Activated T-helper 1 cell treated with anti-CD3 and anti-CD28 coated beads, Interleukin-12 subunit alpha, Interleukin-12 subunit beta, Interleukin-2, Interleukin-4 antibody, amounts not matched to agents 30 ng/mL and 10 ng/mL and 1 ng/mL, durations not matched to agents 14 hours and 24 hours and 36 hours (primary cell): ENCODE measurements at regions of chr12 and their contacts with region 1.

Region 1: GRCh38 chr12:47216150-47216677 is 136.5 kb upstream of the AMIGO2 start:
- DNase-seq: peak; percentile 72
- H3K4me3 Mint-ChIP-seq: peak overlapping the region; percentile 93
- H3K27ac Mint-ChIP-seq: peak overlapping the region; percentile 96
- H3K4me1 Mint-ChIP-seq: peaks cover 63% of the 10 kb centered on the region
- H3K27me3 Mint-ChIP-seq: no peaks in the 10 kb centered on the region

Region 2: DNA sequence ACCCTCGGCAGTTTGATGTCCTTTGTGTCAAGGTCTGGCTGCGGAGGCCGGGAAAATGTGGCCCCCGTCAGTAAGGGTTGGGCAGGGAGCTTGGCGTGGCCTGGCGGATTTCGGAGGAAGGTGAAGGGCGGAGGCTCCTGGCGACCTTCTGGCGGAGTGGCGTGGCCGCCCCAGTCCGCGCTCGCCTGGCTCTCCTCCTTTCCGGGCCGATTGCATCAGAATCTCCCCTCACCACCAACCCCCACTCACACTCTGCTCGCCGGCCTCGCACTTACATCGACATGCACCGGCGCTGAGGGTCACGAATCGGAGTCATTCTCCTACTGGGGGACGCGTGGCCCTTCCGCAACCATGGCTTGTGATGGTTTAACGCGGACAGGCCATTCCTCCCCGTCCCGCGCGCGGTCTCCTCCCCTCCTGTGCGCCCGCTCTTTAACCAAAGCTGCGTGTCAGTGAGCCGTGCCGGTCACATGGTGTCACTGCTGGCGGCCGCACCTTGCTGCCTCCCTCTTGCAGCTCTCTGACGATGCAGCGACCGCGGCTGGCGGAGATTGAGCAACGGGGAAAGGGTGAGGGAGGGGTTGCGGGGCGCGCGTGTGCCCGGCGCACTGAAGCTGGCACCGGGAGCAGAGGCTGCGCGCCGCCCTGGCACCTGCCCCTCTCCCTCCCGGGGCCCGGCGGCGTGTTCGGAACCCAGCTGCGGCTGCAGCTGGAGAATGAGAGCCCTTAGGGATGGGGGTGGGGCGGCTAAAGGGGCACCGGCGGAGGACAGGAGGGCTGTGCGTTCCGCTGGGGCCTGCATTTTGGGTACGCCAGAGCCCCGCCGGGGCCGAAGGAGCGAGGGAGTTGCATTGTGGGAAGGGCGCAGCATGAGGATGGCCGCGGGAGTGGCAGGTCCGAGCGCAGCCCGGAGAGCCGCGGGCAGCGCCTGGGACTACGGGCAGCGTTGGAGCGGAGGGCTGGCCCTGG is 947.3 kb before region 1 on chr12 and contains the start of gene SLC38A1:
- intact Hi-C with region 1: loop called (anchors 5 kb)
- DNase-seq: peak; percentile 85
- H3K4me3 Mint-ChIP-seq: no peak within 1 kb of the TSS
- H3K27ac Mint-ChIP-seq: no peak within 1 kb of the TSS
- H3K4me1 Mint-ChIP-seq: peaks cover 28% of the 10 kb centered on the region
- H3K27me3 Mint-ChIP-seq: no peaks in the 10 kb centered on the region
- total RNA-seq, gene SLC38A1: 172 and 182 TPM in 2 replicates

Region 3: DNA sequence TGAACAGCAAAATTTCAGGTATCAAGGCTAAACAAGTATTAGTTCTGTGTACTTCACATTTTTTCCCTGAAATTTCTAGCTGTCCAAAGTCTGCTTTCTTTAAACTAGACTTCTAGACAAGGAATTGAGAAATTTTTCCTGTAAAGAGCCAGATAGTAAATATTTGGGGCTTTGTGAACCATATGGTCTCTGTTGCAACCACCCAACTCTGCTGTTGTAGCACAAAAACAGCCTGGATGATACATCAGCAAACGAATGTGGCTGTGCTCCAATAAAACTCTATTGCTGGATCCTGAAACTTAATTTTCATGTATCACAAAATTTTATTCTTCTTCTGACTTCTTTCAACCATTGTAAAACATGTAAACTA is 294.5 kb before region 1 on chr12:
- intact Hi-C with region 1: no loop called
- DNase-seq: no peak
- H3K4me3 Mint-ChIP-seq: no peak overlapping the region
- H3K27ac Mint-ChIP-seq: no peak overlapping the region
- H3K4me1 Mint-ChIP-seq: no peaks in the 10 kb centered on the region
- H3K27me3 Mint-ChIP-seq: peaks cover 7% of the 10 kb centered on the region

Region 4: DNA sequence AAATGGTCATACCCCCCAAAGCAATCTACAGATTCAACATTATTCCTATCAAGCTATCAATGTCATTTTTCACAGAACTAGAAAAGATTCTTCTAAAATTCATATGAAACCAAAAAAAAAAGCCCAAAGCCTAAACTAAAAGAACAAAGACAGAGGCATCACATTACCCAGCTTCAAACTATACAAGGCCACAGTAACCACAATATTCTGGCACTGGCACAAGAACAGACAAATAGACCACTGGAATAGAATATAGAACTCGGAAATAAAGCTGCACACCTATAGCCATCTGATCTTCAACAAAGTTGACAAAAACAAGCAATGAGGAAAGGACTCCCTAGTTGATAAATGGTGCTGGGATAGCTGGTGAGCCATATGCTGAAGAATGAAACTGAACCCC is 226.0 kb before region 1 on chr12:
- intact Hi-C with region 1: no loop called
- DNase-seq: no peak
- H3K4me3 Mint-ChIP-seq: no peak overlapping the region
- H3K27ac Mint-ChIP-seq: no peak overlapping the region
- H3K4me1 Mint-ChIP-seq: no peaks in the 10 kb centered on the region
- H3K27me3 Mint-ChIP-seq: peaks cover 15% of the 10 kb centered on the region

Region 5: GRCh38 chr12:47079468-47079980 is 136.7 kb before region 1 on chr12 and contains the starts of genes AMIGO2 and PCED1B:
- intact Hi-C with region 1: loop called (anchors 1 kb)
- DNase-seq: peak; percentile 63
- H3K4me3 Mint-ChIP-seq: peak within 1 kb of the TSS; percentile 97
- H3K27ac Mint-ChIP-seq: peak within 1 kb of the TSS; percentile 97
- H3K4me1 Mint-ChIP-seq: peaks cover 81% of the 10 kb centered on the region
- H3K27me3 Mint-ChIP-seq: no peaks in the 10 kb centered on the region
- total RNA-seq, gene AMIGO2: 11.6 and 12.5 TPM in 2 replicates
- total RNA-seq, gene PCED1B: 50.8 and 55.5 TPM in 2 replicates

Region 6: DNA sequence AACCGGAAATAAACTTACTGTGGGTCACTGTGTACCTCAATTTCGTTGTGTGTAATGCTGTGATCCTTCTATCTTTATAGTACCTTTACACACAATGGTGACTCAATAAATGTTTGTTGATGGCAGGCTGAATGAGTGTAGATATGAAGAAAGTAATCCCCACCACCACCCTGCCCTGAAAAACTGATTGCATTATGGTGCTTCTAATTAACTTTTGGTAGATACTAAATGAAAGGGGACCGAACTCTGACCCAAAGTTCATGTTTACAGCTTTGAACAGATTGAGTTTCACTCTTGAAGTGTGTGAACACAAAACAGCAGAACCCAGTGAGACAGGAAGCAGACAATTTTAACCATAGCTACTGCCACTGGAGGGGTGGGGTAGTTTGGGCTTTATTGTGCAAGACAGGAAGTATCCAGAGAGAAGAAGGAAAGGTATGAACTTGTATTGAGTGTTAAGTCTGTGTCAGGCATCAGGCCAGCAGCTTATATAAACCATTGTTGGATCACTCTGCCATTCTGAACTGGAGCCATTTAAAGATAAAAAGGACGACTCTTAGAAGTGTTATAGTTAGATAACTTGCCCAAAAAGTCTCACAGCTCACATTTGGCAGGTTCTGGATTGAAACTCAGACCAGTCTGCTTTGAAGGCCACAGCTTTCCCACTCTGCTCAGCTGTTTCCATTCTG is 60.6 kb after region 1 on chr12:
- intact Hi-C with region 1: loop called (anchors 1 kb)
- DNase-seq: peak; percentile 63
- H3K4me3 Mint-ChIP-seq: peak overlapping the region; percentile 46
- H3K27ac Mint-ChIP-seq: peak overlapping the region; percentile 88
- H3K4me1 Mint-ChIP-seq: peaks cover 66% of the 10 kb centered on the region
- H3K27me3 Mint-ChIP-seq: no peaks in the 10 kb centered on the region

Region 7: GRCh38 chr12:47361389-47362021 is 145.3 kb after region 1 on chr12:
- intact Hi-C with region 1: loop called (anchors 1 kb)
- DNase-seq: peak; percentile 52
- H3K4me3 Mint-ChIP-seq: peak overlapping the region; percentile 67
- H3K27ac Mint-ChIP-seq: peak overlapping the region; percentile 97
- H3K4me1 Mint-ChIP-seq: peaks cover 56% of the 10 kb centered on the region
- H3K27me3 Mint-ChIP-seq: no peaks in the 10 kb centered on the region

Region 8: DNA sequence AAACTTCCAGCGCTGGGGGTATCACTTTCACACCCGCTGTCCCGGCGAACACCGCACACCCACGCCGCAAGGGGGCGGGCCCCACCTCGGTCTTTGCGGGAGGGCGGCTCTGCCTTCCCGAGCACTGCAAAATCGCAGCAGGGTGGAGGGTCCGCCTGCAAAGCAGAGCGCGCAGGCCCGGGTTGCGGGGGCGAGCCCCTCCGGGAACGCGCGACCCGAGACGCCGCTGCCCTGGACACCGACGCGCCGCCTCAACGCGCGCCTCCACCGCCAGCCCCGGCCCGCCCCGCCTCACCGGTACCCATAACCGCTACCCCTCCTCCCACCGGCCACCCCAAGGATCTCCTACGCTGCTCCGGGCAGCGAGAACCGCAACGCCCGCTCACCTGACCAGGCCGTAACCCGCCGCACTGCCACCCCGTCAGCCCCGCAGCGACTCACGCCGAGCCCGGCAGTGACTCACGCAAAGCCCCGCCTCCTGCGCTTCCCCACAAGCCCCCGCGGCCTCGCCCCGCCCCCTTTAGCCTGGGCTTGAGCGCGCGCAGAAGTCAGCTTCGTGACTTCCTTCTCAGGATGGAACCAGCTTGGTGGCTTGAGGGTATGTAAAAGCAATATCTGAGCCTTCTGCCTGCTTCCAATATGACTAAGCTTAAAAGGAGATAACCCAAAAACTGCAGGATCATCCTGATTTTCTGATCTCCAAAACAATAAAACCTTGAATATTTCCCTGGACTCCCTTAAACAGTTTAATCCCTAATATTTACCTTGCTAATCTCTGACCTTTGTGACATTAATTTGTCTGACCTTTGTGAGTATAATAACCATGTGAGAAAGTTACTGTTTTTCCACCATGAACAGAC is 489.6 kb after region 1 on chr12 and contains the start of gene RPAP3:
- intact Hi-C with region 1: loop called (anchors 2 kb)
- DNase-seq: peak; percentile 97
- H3K4me3 Mint-ChIP-seq: peak within 1 kb of the TSS; percentile 97
- H3K27ac Mint-ChIP-seq: peak within 1 kb of the TSS; percentile 98
- H3K4me1 Mint-ChIP-seq: peaks cover 58% of the 10 kb centered on the region
- H3K27me3 Mint-ChIP-seq: no peaks in the 10 kb centered on the region
- total RNA-seq, gene RPAP3: 61.2 and 64.9 TPM in 2 replicates